IMR-90 (cell line): ENCODE measurements at regions of chr7 and their contacts with region 1.

Region 1: GRCh38 chr7:90777465-90777864 is 181.3 kb downstream of the CDK14 start:
- DNase-seq: no peak
- ATAC-seq: peak; percentile 72
- H3K4me3 ChIP-seq: no peak overlapping the region
- H3K27ac ChIP-seq: no peak overlapping the region
- H3K4me1 ChIP-seq: peaks cover 3% of the 10 kb centered on the region
- H3K27me3 ChIP-seq: no peaks in the 10 kb centered on the region
- CTCF ChIP-seq: no peak
- POLR2A ChIP-seq: no peak
- RAD21 ChIP-seq: no peak

Region 2: GRCh38 chr7:90708841-90709317 is 68.6 kb before region 1 on chr7:
- CTCF ChIA-PET with region 1: no interaction called
- POLR2A ChIA-PET with region 1: no interaction called
- dilution Hi-C with region 1: no loop called
- in situ Hi-C with region 1: no loop called
- intact Hi-C with region 1: no loop called
- DNase-seq: no peak
- ATAC-seq: no peak
- H3K4me3 ChIP-seq: no peak overlapping the region
- H3K27ac ChIP-seq: no peak overlapping the region
- H3K4me1 ChIP-seq: peaks cover 12% of the 10 kb centered on the region
- H3K27me3 ChIP-seq: no peaks in the 10 kb centered on the region
- CTCF ChIP-seq: peak; percentile 37
- POLR2A ChIP-seq: no peak
- RAD21 ChIP-seq: peak; percentile 41

Region 3: DNA sequence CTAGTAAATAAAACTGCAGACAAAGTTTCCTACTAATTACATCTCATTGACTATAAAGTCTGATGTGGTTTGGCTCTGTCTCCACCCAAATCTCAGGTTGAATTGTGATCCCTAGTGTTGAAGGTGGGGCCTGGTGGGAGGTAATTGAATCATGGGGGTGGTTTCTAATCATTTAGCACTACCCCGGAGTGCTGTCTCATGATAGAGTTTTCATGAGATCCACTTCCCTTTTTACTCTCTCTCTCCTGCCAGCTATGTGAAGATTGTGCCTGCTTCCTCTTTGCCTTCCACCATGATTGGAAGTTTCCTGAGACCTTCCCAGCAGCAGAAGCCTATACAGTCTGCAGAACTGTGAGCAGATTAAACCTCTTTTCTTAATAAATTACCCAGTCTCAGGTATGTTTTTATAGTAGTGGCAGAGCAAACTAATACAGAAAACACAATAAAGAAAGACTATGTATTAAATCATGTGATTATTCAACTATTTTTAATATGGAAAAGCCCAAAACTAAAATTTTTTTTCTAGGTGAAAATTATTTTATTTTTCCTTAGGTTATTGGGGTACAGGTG is 718.9 kb after region 1 on chr7:
- CTCF ChIA-PET with region 1: no interaction called
- POLR2A ChIA-PET with region 1: no interaction called
- dilution Hi-C with region 1: no loop called
- in situ Hi-C with region 1: no loop called
- intact Hi-C with region 1: loop called (anchors 5 kb)
- DNase-seq: no peak
- ATAC-seq: no peak
- H3K4me3 ChIP-seq: no peak overlapping the region
- H3K27ac ChIP-seq: no peak overlapping the region
- H3K4me1 ChIP-seq: no peaks in the 10 kb centered on the region
- H3K27me3 ChIP-seq: no peaks in the 10 kb centered on the region
- CTCF ChIP-seq: no peak
- POLR2A ChIP-seq: no peak
- RAD21 ChIP-seq: no peak